HEK293 (cell line): ENCODE measurements at regions of chr11 and their contacts with region 1.

Region 1: DNA sequence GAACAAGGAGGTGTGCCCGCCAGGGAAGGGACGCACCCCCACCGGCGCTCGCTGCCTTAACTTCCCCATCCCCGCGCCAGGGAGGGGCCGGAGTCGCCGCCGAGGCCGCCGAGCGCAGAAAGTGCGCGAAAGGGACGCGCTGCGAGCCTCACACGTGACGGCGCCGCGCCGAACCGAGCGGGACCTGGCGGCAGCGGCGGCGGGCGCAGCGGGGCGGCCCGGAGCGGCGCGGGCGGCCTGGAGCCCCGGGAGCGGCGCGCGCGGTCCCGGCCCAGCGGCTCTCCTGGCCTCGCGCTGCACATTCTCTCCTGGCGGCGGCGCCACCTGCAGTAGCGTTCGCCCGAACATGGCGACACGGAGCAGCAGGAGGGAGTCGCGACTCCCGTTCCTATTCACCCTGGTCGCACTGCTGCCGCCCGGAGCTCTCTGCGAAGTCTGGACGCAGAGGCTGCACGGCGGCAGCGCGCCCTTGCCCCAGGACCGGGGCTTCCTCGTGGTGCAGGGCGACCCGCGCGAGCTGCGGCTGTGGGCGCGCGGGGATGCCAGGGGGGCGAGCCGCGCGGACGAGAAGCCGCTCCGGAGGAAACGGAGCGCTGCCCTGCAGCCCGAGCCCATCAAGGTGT is at the start of gene SORL1:
- H3K4me3 ChIP-seq: peak within 1 kb of the TSS; percentile 76
- H3K27ac ChIP-seq: peak within 1 kb of the TSS; percentile 53; the same call in 1 of the 2 replicates
- H3K4me1 ChIP-seq: no peaks in the 10 kb centered on the region
- CTCF ChIP-seq: peak; percentile 64

Region 2: DNA sequence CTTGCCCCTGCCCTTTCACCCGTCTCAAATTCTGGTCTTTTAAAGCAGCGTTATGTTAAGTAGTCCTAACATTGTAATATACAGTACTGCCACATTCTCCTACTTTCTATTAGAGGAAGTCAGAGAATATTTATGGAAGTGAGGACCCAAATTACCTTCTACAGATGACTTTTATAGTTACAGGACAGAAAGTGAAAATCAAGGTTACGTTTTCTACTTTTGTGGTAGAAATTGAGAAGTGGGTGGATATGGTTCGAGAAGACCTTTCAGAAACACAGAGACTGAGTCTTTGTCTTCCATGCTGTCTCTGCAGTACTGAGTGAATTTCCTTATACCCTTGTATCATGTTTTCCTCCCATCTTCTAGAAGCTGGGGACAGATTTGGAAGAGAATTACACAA is 142.4 kb before region 1 on chr11:
- CTCF ChIA-PET with region 1: no interaction called
- POLR2A ChIA-PET with region 1: no interaction called
- H3K4me3 ChIP-seq: no peak overlapping the region
- H3K27ac ChIP-seq: no peak overlapping the region
- H3K4me1 ChIP-seq: no peaks in the 10 kb centered on the region
- CTCF ChIP-seq: no peak

Region 3: DNA sequence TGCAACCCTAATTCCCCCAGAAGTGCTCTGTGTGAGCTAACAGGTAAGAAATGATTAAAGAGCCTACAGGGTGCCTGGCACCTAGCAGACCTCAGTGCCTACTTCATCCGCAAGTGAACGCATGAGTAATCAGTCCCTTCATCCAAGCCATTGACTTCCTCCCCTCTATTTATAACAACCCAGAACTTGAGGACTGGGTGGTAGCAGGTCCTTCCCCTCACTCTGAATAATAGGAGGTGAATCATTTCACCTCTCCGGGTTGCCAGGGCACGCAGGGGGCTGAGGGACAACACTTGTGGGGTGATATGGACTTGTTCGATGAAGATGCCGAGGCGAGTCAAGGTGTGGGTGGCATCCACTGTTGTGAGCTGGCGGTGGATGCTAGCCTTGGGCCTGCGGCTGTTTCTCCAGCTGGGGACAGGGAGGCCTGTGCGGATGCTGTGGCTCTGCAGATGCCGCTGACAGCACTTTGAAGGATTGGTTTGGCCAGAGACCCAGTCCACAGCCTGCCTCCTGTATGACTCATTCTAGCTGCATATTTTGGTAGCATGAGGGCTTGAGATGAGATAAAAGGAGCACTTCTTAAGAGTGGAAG is 12.4 kb after region 1 on chr11:
- CTCF ChIA-PET with region 1: interaction called, 16 read pairs
- POLR2A ChIA-PET with region 1: interaction called, 11 read pairs
- H3K4me3 ChIP-seq: no peak overlapping the region
- H3K27ac ChIP-seq: no peak overlapping the region
- H3K4me1 ChIP-seq: peaks cover 12% of the 10 kb centered on the region
- CTCF ChIP-seq: no peak

Region 4: GRCh38 chr11:121476379-121477032 is 24.4 kb after region 1 on chr11:
- CTCF ChIA-PET with region 1: no interaction called
- POLR2A ChIA-PET with region 1: no interaction called
- H3K4me3 ChIP-seq: no peak overlapping the region
- H3K27ac ChIP-seq: no peak overlapping the region
- H3K4me1 ChIP-seq: no peaks in the 10 kb centered on the region
- CTCF ChIP-seq: no peak

Region 5: DNA sequence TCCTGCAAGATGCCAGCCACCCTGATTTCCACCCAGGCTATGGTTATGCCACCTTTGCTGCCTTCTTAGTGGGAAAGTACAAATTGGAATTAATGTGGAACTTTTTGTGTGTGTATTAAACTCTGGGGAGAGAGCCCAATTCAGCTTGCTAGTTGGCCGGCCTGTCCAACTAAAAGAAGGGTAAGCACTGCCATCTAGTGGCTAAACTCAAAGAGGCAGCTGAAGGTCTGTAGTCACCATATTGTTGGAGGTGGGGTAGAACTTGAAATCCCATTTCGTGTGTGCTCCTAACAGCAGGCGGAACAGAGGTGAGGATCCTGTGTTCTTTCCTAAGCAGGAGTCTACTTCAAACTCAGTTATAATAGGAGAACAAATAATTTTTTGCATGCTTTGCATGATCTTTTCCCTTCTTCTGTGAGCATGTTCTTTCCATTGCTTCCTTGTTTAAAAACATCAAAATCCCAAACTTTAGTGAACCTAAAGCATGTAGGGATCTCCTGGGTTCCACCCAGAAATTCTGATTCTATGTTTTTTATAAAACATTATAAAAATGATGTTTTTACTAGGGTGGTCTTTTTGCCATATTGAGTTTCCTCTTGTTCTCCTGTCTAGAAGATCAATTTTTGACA is 139.4 kb after region 1 on chr11:
- CTCF ChIA-PET with region 1: interaction called, 12 read pairs
- POLR2A ChIA-PET with region 1: no interaction called
- H3K4me3 ChIP-seq: no peak overlapping the region
- H3K27ac ChIP-seq: no peak overlapping the region
- H3K4me1 ChIP-seq: no peaks in the 10 kb centered on the region
- CTCF ChIP-seq: no peak